ENCODE measurements at regions of chr1 and their contacts with region 1.

Region 1: DNA sequence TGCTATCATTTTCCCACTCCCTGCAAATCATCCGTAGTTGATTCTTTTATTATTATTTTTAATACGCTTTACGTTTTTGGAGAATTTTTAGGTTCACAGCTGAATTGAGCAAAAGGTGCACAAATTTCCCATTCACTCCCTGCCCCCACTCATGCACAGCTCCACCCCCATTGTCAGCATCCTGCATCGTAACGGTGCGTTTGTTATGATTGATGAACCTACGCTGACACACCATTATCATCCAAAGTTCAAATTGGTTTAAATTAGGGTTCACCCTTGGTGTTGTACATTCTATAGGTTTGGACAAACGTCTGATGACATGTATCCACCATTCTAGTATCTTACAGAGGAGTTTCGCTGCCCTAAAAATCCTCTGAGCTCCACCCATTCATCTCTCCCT is 44.5 kb downstream of the EDARADD start:
- DNase-seq: no peak
- ATAC-seq: no peak
- H3K4me3 ChIP-seq: no peak overlapping the region
- H3K27ac ChIP-seq: no peak overlapping the region
- H3K4me1 ChIP-seq: no peaks in the 10 kb centered on the region
- H3K27me3 ChIP-seq: no peaks in the 10 kb centered on the region
- CTCF ChIP-seq: no peak

Region 2: DNA sequence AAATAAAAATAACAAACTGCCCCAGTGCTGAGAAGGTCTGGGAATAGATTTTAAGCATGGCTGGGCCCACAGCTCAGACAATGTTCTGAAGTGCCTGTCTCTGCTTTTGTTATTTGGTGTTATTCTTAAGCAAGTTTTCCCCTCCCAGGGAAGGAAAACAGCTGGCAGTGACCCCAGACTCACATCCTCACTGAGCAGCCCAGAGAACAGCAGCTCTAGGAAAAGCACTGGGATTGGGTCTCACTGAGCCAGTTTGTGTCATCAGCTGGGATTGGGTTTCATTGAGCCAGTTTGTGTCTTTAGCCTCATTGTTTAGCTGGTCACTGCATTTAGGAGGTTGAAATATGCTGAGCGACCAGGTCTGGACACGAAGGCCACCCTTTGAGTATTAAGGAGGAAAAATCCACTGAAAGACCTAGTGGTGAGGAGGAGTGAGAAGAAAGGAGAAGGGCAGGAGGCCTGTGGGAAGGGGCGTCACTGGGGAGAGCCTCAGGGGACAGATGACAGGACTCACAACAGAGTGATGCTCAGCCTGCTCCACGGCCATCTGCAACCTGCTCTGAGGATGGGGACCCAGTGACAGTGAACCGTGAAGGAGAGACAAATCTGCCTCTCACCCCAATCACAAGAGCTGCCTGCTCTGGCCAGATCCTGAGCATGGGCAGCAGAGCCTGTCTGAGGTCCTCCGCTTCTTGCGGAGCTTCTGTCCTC is 1413.7 kb before region 1 on chr1:
- CTCF ChIA-PET with region 1: no interaction called
- POLR2A ChIA-PET with region 1: interaction called, 13 read pairs
- in situ Hi-C with region 1: no loop called
- intact Hi-C with region 1: no loop called
- DNase-seq: no peak
- ATAC-seq: peak; percentile 16; the same call in 1 of the 2 replicates
- H3K4me3 ChIP-seq: no peak overlapping the region
- H3K27ac ChIP-seq: peak overlapping the region; percentile 70
- H3K4me1 ChIP-seq: peaks cover 20% of the 10 kb centered on the region
- H3K27me3 ChIP-seq: no peaks in the 10 kb centered on the region
- CTCF ChIP-seq: no peak